Breast epithelium (tissue), 4 donors: ENCODE measurements at regions of chr6 and their contacts with region 1.

Region 1: GRCh38 chr6:81614292-81614691 is 138.2 kb downstream of the TENT5A start:
- DNase-seq: no peak
- H3K4me3 ChIP-seq: no peak overlapping the region
- H3K27ac ChIP-seq: no peak overlapping the region
- H3K4me1 ChIP-seq: no peaks in the 10 kb centered on the region
- H3K27me3 ChIP-seq: no peaks in the 10 kb centered on the region
- CTCF ChIP-seq: no peak
- POLR2A ChIP-seq: no peak

Region 2: GRCh38 chr6:79614754-79615261 is 1999.5 kb before region 1 on chr6:
- intact Hi-C with region 1: loop called (anchors 10 kb)
- DNase-seq: no peak
- H3K4me3 ChIP-seq: no peak overlapping the region
- H3K27ac ChIP-seq: no peak overlapping the region
- H3K4me1 ChIP-seq: no peaks in the 10 kb centered on the region
- H3K27me3 ChIP-seq: no peaks in the 10 kb centered on the region
- CTCF ChIP-seq: no peak
- POLR2A ChIP-seq: no peak

Region 3: GRCh38 chr6:81808851-81809570 is 194.7 kb after region 1 on chr6:
- intact Hi-C with region 1: no loop called
- DNase-seq: no peak
- H3K4me3 ChIP-seq: no peak overlapping the region
- H3K27ac ChIP-seq: no peak overlapping the region
- H3K4me1 ChIP-seq: no peaks in the 10 kb centered on the region
- H3K27me3 ChIP-seq: no peaks in the 10 kb centered on the region
- CTCF ChIP-seq: no peak
- POLR2A ChIP-seq: no peak